ENCODE measurements at regions of chr1 and their contacts with region 1.

Region 1: GRCh38 chr1:119080586-119080985 is 59.9 kb downstream of the WARS2 start:
- DNase-seq: peak; percentile 80
- H3K4me3 ChIP-seq: no peak overlapping the region
- H3K27me3 ChIP-seq: no peaks in the 10 kb centered on the region
- CTCF ChIP-seq: no peak

Region 2: DNA sequence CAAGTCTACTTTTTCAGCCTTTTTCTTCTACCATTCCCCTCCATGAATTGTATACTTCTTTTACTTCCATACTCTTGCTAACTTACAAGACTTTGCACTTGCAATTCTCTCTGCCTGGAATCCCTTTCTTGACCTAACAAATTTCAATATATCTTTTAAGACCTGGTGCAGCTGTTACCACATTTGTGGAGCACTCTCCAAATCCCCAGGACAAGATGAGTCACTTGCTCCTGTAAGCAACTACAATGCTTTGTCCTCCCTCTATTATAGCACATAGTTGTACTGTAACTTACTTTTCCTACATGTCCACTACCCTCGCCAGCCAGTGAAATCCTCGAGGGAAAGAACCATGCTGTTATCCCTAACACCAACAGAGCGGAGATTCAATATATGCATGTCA is 16.8 kb after region 1 on chr1:
- CTCF ChIA-PET with region 1: interaction called, 10 read pairs
- POLR2A ChIA-PET with region 1: no interaction called
- DNase-seq: no peak
- H3K4me3 ChIP-seq: no peak overlapping the region
- H3K27me3 ChIP-seq: no peaks in the 10 kb centered on the region
- CTCF ChIP-seq: no peak

Region 3: GRCh38 chr1:119184972-119185371 is 104.4 kb after region 1 on chr1:
- CTCF ChIA-PET with region 1: no interaction called
- POLR2A ChIA-PET with region 1: no interaction called
- DNase-seq: no peak
- H3K4me3 ChIP-seq: no peak overlapping the region
- H3K27me3 ChIP-seq: no peaks in the 10 kb centered on the region
- CTCF ChIP-seq: no peak